Vagina (tissue), 2 donors: ENCODE measurements at regions of chr4 and their contacts with region 1.

Region 1: DNA sequence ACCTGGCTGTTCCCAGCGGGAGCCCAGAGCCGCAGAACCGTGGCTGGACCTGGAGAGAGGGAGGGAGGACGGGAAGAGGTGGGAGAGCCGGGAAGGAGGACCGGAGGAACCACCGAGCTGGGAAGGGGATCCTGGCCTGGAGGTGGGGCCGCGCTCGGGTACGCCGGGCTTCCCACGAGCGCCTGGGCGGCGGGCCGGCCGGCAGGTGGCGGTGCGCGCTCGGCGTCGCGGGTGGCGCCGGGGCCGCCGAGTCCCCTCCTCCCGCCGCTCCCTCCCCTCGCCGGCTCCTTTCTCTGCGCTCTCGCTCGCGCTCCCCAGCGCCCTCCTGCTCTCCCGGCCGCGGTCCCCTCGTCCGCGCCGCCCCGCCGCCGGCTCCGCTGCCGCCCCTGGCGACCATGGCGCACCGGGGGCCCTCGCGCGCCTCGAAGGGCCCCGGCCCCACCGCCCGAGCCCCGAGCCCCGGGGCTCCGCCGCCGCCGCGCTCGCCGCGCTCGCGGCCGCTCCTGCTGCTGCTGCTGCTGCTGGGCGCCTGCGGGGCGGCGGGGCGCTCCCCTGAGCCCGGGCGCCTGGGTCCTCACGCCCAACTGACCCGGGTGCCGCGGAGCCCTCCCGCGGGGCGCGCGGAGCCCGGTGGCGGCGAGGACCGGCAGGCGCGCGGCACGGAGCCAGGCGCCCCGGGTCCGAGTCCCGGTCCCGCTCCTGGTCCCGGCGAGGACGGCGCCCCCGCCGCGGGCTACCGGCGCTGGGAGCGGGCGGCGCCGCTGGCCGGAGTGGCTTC is at the start of gene SORCS2:
- DNase-seq: peak in 1 of 2 donors; percentile 19
- H3K4me3 ChIP-seq: peak within 1 kb of the TSS; percentile 51 to 69
- H3K27ac ChIP-seq: peak within 1 kb of the TSS; percentile 29
- H3K4me1 ChIP-seq: peaks cover 17% of the 10 kb centered on the region
- H3K27me3 ChIP-seq: no peaks in the 10 kb centered on the region
- CTCF ChIP-seq: peak in 2 of 3 experiments; percentile 26 to 71
- POLR2A ChIP-seq: no peak
- total RNA-seq, gene SORCS2: 5.4 TPM

Region 2: DNA sequence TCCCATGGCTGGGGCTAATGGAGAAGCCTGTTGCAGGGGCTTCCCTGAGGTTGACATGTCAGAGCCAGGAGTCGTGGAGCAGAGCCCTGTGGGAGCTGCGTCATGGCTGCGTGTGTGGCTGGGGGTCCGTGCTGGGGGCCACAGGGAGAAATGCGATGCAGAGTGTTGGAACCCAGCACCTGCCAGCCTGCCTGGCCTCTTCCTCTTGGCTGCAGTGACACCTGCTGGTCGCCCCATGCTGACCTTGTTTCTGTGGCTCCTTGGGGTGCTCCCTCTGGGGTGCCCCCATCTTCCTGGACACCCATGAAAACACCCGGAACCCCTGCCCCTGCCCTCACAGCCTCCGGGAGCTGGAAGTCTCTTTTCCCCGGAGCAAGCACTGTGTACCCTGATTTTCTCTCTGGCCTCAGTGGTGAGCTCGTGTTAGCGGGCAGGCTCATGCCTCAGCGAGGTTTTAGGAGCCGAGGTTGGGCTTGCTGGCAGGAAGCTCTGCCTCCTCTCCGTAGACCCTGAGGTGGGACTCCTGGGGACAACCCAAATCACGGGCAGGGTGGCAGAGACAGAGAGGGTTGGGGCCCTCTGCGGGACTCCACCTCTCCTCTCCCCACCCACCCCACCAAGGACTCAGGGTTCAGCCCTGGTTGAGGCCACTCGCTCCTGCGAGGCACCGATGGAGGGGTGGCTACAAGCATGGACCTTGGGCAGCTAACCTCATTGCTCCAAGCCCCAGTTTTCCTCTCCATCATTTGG is 103.6 kb after region 1 on chr4:
- intact Hi-C with region 1: loop called (anchors 2 kb)
- DNase-seq: no peak
- H3K4me3 ChIP-seq: no peak overlapping the region
- H3K27ac ChIP-seq: no peak overlapping the region
- H3K4me1 ChIP-seq: peaks cover 19% of the 10 kb centered on the region
- H3K27me3 ChIP-seq: no peaks in the 10 kb centered on the region
- CTCF ChIP-seq: peak; percentile 34 to 78 (median 63)
- POLR2A ChIP-seq: no peak

Region 3: GRCh38 chr4:7328898-7329638 is 136.6 kb after region 1 on chr4:
- intact Hi-C with region 1: loop called (anchors 1 kb)
- DNase-seq: no peak
- H3K4me3 ChIP-seq: no peak overlapping the region
- H3K27ac ChIP-seq: no peak overlapping the region
- H3K4me1 ChIP-seq: peaks cover 41% of the 10 kb centered on the region
- H3K27me3 ChIP-seq: no peaks in the 10 kb centered on the region
- CTCF ChIP-seq: no peak
- POLR2A ChIP-seq: no peak

Region 4: DNA sequence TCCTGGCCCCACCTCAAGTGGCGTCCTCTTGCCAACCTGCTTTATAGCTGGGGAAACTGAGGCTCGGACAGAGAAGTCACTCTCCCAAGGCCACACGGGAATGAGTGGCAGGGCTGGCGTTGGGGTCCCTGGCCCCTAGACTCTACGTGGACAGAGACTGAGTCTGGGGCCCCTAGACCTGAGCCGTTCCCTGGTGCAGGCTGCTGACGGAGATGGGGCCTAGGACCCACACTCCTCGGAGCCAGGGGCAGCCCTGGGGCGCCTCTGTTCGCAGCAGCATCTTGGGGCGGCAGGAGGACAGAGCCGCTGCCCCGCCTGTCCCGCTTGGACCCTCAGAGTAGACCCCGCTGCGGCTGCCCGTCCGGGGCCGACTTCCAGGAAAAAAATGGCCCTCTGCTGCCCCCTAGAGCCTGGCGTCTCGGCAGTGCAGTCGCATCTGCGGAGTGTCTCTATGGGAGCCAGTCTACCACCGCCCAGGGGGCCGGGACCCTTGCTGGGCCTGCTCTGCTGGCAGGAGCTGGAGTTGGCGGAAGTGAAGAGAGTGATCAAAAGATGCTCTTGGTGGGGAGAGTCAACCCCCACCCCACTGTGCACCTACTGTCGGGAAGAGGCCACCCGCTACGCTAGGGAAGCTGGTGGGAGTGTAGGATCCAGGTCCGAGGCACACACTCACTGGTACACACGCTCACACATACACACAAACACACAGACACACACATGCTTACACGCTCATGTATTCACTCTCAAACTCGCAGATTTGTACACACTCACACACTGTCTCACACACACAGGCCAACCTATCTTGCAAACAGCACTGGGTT is 527.1 kb after region 1 on chr4:
- intact Hi-C with region 1: loop called (anchors 5 kb)
- DNase-seq: no peak
- H3K4me3 ChIP-seq: no peak overlapping the region
- H3K27ac ChIP-seq: no peak overlapping the region
- H3K4me1 ChIP-seq: no peaks in the 10 kb centered on the region
- H3K27me3 ChIP-seq: no peaks in the 10 kb centered on the region
- CTCF ChIP-seq: peak; percentile 56 to 80 (median 76)
- POLR2A ChIP-seq: no peak